Activated CD4-positive, alpha-beta memory T cell treated with anti-CD3 and anti-CD28 coated beads, Interleukin-2, amount 10 ng/mL, durations not matched to agents 7 days and 5 days (primary cell): ENCODE measurements at regions of chr1 and their contacts with region 1.

Region 1: DNA sequence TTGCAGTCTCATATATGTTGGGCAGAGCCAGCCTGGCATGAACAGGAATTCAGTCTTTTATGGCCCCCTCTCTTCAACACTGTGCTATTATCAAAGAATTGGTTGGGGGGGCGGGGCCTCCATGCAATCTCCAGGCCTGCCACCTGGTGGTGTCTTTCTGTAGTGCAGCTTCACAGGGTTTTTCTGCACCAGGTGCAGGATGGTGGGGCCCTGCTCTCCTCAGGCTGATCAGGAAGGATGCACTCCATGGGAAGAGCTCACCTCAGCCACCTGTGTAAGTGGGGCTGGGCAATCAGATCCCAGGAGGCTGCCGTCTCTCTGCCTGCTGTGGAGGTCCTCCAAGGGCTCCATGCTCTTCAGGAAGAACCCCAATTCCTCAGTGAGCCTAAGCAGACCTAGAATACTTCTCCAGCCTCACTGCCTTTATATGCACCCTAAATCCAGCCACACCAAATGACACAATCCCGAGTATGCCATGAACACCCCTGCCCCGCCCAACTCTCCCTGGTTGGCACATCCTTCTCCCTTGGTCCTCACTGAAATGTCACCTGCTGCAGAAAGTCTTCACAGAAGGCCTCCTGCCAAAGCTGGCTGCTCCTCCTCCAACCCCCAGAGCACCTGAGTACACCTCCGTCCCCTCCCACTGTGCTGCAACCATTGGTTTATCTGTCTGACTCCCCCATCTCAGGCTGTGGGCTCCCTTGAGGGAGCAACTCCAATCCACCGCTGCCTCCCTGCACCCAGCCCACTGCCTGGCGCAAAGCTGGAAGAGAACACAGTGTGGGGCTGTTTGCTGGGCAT is 16.5 kb downstream of the STK40 start:
- DNase-seq: peak; percentile 86
- H3K4me3 Mint-ChIP-seq: no peak overlapping the region
- H3K27ac Mint-ChIP-seq: peak overlapping the region; percentile 56
- H3K4me1 Mint-ChIP-seq: peaks cover 72% of the 10 kb centered on the region
- H3K27me3 Mint-ChIP-seq: no peaks in the 10 kb centered on the region

Region 2: DNA sequence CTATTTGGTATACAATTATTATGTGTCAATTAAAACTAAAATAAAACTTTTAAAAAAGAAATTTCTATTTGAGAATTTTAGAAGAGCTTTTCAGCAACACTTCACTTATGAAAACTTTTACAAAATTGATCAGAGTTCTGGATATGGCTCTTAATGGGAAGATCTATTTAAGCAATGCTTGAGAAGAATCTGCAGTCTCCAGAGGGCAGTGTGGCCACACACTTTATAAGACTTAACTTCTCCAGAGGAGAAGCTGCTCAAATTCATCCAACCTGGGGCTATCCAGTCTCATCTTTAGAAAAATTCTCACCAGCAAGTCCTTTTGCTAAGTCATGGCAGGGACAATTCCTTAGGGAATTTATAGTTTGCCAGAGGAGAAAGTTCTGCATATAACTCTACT is 511.4 kb before region 1 on chr1:
- CTCF ChIA-PET with region 1: no interaction called
- POLR2A ChIA-PET with region 1: no interaction called
- DNase-seq: no peak
- H3K4me3 Mint-ChIP-seq: no peak overlapping the region
- H3K27ac Mint-ChIP-seq: no peak overlapping the region
- H3K4me1 Mint-ChIP-seq: no peaks in the 10 kb centered on the region
- H3K27me3 Mint-ChIP-seq: no peaks in the 10 kb centered on the region

Region 3: GRCh38 chr1:36269408-36269838 is 99.8 kb before region 1 on chr1:
- CTCF ChIA-PET with region 1: no interaction called
- POLR2A ChIA-PET with region 1: no interaction called
- DNase-seq: no peak
- H3K4me3 Mint-ChIP-seq: no peak overlapping the region
- H3K27ac Mint-ChIP-seq: no peak overlapping the region
- H3K4me1 Mint-ChIP-seq: peaks cover 12% of the 10 kb centered on the region
- H3K27me3 Mint-ChIP-seq: no peaks in the 10 kb centered on the region

Region 4: DNA sequence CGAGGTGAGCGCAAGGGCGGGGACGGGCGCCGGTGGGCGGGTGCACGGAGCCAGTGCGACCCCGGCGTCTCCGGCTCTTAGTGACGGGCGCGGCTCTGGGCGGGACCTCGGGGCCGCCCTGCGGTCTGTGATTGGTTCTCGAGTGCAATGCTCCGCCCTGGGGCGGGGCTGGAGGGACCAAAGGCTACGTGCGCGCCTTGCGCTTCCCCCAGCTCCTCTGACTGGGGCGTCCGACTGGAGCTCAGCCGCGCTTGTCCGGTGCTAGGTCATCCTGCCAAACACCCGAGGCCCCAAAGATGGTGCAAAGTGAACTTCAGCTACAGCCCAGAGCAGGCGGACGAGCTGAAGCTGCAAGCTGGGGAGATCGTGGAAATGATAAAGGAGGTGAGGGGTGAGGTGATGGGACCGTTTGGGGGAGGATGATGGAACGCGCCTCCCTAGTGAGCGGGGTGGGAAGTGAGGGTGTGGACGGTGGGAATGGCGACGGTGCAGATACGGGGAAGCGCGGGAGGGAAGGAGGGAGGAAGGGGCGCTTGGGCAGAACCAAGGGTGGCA is 62.3 kb before region 1 on chr1:
- CTCF ChIA-PET with region 1: interaction called, 10 read pairs
- POLR2A ChIA-PET with region 1: no interaction called
- DNase-seq: peak; percentile 93
- H3K4me3 Mint-ChIP-seq: peak overlapping the region; percentile 89
- H3K27ac Mint-ChIP-seq: peak overlapping the region; percentile 81
- H3K4me1 Mint-ChIP-seq: peaks cover 40% of the 10 kb centered on the region
- H3K27me3 Mint-ChIP-seq: no peaks in the 10 kb centered on the region

Region 5: GRCh38 chr1:36342481-36343478 is 26.5 kb before region 1 on chr1:
- CTCF ChIA-PET with region 1: interaction called, 35 read pairs
- POLR2A ChIA-PET with region 1: interaction called, 10 read pairs
- DNase-seq: peak; percentile 57
- H3K4me3 Mint-ChIP-seq: no peak overlapping the region
- H3K27ac Mint-ChIP-seq: peak overlapping the region; percentile 41
- H3K4me1 Mint-ChIP-seq: peaks cover 19% of the 10 kb centered on the region
- H3K27me3 Mint-ChIP-seq: no peaks in the 10 kb centered on the region

Region 6: GRCh38 chr1:36350659-36351226 is 18.5 kb before region 1 on chr1:
- CTCF ChIA-PET with region 1: interaction called, 8 read pairs
- POLR2A ChIA-PET with region 1: interaction called, 24 read pairs
- DNase-seq: peak; percentile 48
- H3K4me3 Mint-ChIP-seq: no peak overlapping the region
- H3K27ac Mint-ChIP-seq: peak overlapping the region; percentile 63
- H3K4me1 Mint-ChIP-seq: peaks cover 30% of the 10 kb centered on the region
- H3K27me3 Mint-ChIP-seq: no peaks in the 10 kb centered on the region

Region 7: DNA sequence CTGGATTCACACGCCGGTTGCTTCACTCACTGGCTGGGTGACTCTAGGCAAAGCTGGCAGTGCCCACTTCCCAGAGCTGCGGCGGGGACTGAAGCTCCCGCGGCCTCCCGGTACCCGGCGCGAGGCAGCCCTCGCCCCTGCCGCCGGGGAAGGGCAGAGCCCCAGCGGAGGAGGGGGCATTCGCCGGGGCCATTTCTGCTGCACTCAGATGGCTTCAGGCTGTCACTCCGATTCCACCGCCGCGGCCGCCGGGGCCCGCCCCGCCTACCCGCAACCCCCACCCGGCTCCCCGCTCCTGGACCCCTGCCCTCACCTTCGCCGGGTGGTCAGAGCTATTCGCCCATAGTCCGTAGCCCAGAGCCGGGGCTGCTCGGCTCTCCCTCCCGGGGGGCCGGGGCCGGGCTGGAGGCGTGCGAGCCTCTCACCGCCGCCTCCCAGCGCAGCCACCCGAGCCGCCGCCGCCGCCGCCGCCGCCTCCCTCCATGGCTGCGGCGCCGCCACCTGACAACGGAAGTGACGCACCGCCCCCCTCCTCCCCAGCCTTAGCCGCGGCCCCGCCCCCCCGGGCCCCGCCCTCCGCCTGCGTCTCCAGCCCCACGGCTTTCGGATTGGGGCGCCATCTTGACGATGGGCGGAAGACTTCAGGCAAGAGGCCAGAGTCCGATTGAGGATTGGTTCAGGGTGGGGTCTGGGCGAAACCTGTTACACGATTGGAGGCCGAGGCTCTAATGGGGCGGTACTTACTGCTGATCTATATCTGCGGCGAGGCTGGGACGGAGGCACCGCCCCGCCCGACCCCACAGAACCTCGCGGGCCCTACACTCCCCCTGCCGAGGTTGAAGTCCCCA is 16.4 kb after region 1 on chr1 and contains the start of gene STK40:
- CTCF ChIA-PET with region 1: interaction called, 66 read pairs
- POLR2A ChIA-PET with region 1: interaction called, 57 read pairs
- DNase-seq: peak; percentile 99
- H3K4me3 Mint-ChIP-seq: peak within 1 kb of the TSS; percentile 87
- H3K27ac Mint-ChIP-seq: peak within 1 kb of the TSS; percentile 100
- H3K4me1 Mint-ChIP-seq: peaks cover 61% of the 10 kb centered on the region
- H3K27me3 Mint-ChIP-seq: no peaks in the 10 kb centered on the region
- total RNA-seq, gene STK40: 75.2 to 76.8 TPM

Region 8: DNA sequence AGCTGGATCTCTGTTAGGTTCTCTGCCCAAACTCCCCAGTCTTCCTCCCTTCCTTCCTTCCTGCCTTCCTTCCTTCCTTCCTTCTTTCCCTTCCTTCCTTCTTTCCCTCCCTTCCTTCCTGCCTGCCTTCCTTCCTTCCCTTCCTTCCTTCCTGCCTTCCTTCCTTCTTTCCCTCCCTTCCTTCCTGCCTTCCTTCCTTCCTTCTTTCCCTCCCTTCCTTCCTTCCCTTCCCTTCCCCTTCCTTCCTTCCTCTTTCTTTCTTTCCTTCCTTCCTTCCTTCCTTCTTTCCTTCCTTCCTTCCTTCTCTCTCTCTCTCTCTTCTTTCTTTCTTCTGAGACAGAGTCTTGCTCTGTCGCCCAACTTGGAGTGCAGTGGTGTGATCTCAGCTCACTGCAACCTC is 37.2 kb after region 1 on chr1:
- CTCF ChIA-PET with region 1: interaction called, 13 read pairs
- POLR2A ChIA-PET with region 1: interaction called, 3 read pairs
- DNase-seq: no peak
- H3K4me3 Mint-ChIP-seq: no peak overlapping the region
- H3K27ac Mint-ChIP-seq: no peak overlapping the region
- H3K4me1 Mint-ChIP-seq: peaks cover 17% of the 10 kb centered on the region
- H3K27me3 Mint-ChIP-seq: no peaks in the 10 kb centered on the region

Region 9: GRCh38 chr1:36411674-36412520 is 42.6 kb after region 1 on chr1:
- CTCF ChIA-PET with region 1: interaction called, 13 read pairs
- POLR2A ChIA-PET with region 1: interaction called, 3 read pairs
- DNase-seq: peak; percentile 70
- H3K4me3 Mint-ChIP-seq: peak overlapping the region; percentile 10
- H3K27ac Mint-ChIP-seq: peak overlapping the region; percentile 95
- H3K4me1 Mint-ChIP-seq: peaks cover 30% of the 10 kb centered on the region
- H3K27me3 Mint-ChIP-seq: no peaks in the 10 kb centered on the region

Region 10: DNA sequence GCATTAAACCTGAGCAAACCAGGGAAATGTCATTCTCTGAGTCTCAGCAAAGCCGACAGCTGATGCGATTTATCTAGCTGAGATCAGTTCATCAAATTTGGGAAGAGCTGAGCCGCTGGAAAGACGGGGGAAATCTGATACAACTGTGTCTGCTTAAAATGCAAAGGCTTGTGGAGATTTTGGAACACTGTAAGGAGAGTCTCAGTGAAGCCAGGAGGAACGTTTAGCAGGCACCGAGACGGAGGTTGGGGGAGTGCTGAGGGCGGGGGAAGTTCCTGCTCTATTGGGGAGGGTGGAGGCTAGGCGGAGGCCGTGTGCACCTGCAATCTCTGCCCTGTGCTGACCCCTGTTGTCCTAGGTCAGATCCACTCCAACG is 256.7 kb after region 1 on chr1:
- CTCF ChIA-PET with region 1: no interaction called
- POLR2A ChIA-PET with region 1: no interaction called
- DNase-seq: no peak
- H3K4me3 Mint-ChIP-seq: no peak overlapping the region
- H3K27ac Mint-ChIP-seq: no peak overlapping the region
- H3K4me1 Mint-ChIP-seq: no peaks in the 10 kb centered on the region
- H3K27me3 Mint-ChIP-seq: peaks cover 15% of the 10 kb centered on the region